OCI-LY7 (cell line): ENCODE measurements at regions of chr3 and their contacts with region 1.

Region 1: DNA sequence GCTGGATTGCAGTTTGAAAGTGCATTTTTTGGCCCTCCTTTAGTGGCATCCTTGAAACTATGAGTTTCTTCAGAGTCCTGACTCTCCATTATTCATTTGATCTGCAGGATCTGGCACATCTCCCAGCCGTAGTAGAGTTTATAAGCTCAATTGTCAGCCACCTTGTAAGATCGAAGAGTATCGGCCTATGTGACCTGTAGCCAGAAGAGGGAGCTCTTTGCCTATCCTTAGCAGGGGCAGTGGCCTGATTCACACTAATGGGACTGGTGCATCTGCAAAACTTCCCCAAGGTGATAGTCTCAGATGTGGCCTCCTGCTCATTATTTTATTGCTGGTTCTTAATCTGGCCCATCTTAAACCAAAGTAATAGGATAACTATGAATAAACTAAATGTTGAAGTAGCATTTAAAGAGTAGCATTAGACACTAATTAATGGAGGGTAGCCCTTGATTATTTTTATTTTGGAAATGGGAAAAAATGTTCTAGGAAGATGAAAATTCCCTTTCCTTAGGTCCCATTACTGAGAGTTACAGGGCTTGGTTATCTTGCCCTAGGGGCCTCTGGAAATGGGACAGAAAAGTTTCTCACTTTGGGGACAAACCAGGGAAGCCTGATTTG is 21.2 kb downstream of the GCSAM start:
- DNase-seq: peak; percentile 96
- H3K4me3 ChIP-seq: no peak overlapping the region
- H3K27ac ChIP-seq: peak overlapping the region; percentile 99
- H3K4me1 ChIP-seq: peaks cover 83% of the 10 kb centered on the region
- CTCF ChIP-seq: peak; percentile 99

Region 2: GRCh38 chr3:112097378-112097777 is 14.5 kb before region 1 on chr3:
- CTCF ChIA-PET with region 1: interaction called, 19 read pairs
- POLR2A ChIA-PET with region 1: interaction called, 12 read pairs
- intact Hi-C with region 1: no loop called
- DNase-seq: no peak
- H3K4me3 ChIP-seq: no peak overlapping the region
- H3K27ac ChIP-seq: no peak overlapping the region
- H3K4me1 ChIP-seq: peaks cover 25% of the 10 kb centered on the region
- CTCF ChIP-seq: no peak

Region 3: GRCh38 chr3:112136959-112137693 is 25.2 kb after region 1 on chr3:
- CTCF ChIA-PET with region 1: interaction called, 12 read pairs
- POLR2A ChIA-PET with region 1: interaction called, 566 read pairs
- intact Hi-C with region 1: loop called (anchors 1 kb)
- DNase-seq: peak; percentile 87
- H3K4me3 ChIP-seq: peak overlapping the region; percentile 30
- H3K27ac ChIP-seq: peak overlapping the region; percentile 99
- H3K4me1 ChIP-seq: peaks cover 68% of the 10 kb centered on the region
- CTCF ChIP-seq: peak; percentile 93

Region 4: DNA sequence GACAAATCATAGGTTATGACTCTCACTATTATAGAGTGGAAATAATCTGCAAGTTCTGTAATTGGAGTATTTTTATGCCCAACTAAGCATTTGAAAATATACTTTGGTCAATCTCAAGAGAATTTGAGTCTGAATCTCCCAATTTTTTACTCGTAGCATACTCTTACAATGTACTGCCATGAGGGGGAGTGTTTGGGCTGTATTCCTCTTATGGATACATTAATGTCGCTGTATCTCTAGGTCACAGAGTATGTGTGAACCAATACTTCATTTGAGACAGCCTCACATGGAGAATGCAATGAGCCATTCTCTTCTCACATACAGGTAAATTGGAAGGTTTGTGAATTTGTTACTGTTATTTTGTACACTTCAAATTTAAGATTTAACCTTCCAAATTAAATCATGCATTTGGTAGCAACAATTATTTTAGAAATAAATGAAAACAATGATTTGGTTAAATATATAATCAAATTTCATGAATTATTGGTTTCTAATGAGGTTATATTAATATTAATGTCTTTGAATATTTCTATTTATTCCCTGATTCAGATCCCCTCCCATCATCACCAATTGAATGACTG is 215.6 kb after region 1 on chr3:
- CTCF ChIA-PET with region 1: no interaction called
- POLR2A ChIA-PET with region 1: no interaction called
- intact Hi-C with region 1: loop called (anchors 2 kb)
- DNase-seq: peak; percentile 83
- H3K4me3 ChIP-seq: no peak overlapping the region
- H3K27ac ChIP-seq: no peak overlapping the region
- H3K4me1 ChIP-seq: peaks cover 6% of the 10 kb centered on the region
- CTCF ChIP-seq: peak; percentile 93

Region 5: GRCh38 chr3:112498914-112499711 is 387.2 kb after region 1 on chr3 and contains the start of gene BTLA:
- CTCF ChIA-PET with region 1: interaction called, 3 read pairs
- POLR2A ChIA-PET with region 1: interaction called, 6 read pairs
- intact Hi-C with region 1: loop called (anchors 5 kb)
- DNase-seq: peak; percentile 74
- H3K4me3 ChIP-seq: peak within 1 kb of the TSS; percentile 72
- H3K27ac ChIP-seq: peak within 1 kb of the TSS; percentile 85
- H3K4me1 ChIP-seq: peaks cover 55% of the 10 kb centered on the region
- CTCF ChIP-seq: no peak
- total RNA-seq, gene BTLA: 7.7 and 8.0 TPM in 2 replicates

Region 6: DNA sequence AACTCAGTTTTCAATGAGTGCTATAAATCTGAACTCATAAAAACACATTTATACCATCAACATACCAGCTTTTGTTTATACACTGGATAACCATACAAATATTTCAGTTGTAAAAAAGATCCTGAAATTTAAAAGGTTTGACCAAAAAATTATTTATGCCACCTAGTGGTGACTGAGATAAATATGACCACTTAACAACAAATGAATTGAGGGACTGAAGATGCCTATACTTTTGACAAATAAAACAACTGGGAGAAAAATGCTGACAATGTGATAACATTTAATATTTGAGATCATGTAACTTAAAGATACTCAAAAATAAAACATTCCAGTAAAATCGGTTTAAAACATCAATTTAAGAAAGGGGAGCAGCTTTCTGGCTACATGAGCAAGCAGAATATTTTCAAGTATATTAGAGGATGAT is 419.5 kb after region 1 on chr3:
- CTCF ChIA-PET with region 1: no interaction called
- POLR2A ChIA-PET with region 1: interaction called, 3 read pairs
- intact Hi-C with region 1: loop called (anchors 1 kb)
- DNase-seq: peak; percentile 61
- H3K4me3 ChIP-seq: no peak overlapping the region
- H3K27ac ChIP-seq: no peak overlapping the region
- H3K4me1 ChIP-seq: no peaks in the 10 kb centered on the region
- CTCF ChIP-seq: peak; percentile 90